Activated CD4-positive, alpha-beta memory T cell treated with anti-CD3 and anti-CD28 coated beads for 36 hours (primary cell): ENCODE measurements at regions of chr6 and their contacts with region 1.

Region 1: GRCh38 chr6:106223300-106223930 is 102.1 kb downstream of the ATG5 start:
- DNase-seq: peak; percentile 75
- H3K4me3 Mint-ChIP-seq: no peak overlapping the region
- H3K27ac Mint-ChIP-seq: no peak overlapping the region
- H3K4me1 Mint-ChIP-seq: peaks cover 37% of the 10 kb centered on the region
- H3K27me3 Mint-ChIP-seq: no peaks in the 10 kb centered on the region

Region 2: DNA sequence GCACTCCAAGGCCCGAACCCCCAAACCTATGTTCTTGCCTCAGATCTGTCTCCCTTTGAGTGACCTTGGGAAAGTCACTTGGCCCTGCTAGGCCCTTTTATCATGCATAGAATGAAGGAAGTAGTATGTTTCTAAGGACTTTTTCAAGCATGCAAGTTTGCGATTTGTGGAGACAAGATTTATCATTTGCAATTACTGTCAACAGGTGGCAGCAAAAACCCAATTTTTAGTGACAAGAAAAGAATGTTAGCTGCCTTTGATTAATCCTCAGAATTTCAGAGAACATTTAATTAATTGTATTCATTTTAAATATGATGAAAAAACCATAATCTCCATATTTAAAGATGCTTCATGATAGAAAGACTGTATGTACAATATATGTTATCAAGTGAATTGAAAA is 792.2 kb before region 1 on chr6:
- CTCF ChIA-PET with region 1: interaction called, 55 read pairs
- POLR2A ChIA-PET with region 1: no interaction called
- intact Hi-C with region 1: loop called (anchors 2 kb)
- DNase-seq: no peak
- H3K4me3 Mint-ChIP-seq: no peak overlapping the region
- H3K27ac Mint-ChIP-seq: no peak overlapping the region
- H3K4me1 Mint-ChIP-seq: no peaks in the 10 kb centered on the region
- H3K27me3 Mint-ChIP-seq: peaks cover 8% of the 10 kb centered on the region

Region 3: GRCh38 chr6:105793130-105793529 is 430.3 kb before region 1 on chr6:
- CTCF ChIA-PET with region 1: no interaction called
- POLR2A ChIA-PET with region 1: no interaction called
- intact Hi-C with region 1: loop called (anchors 5 kb)
- DNase-seq: peak; percentile 30
- H3K4me3 Mint-ChIP-seq: no peak overlapping the region
- H3K27ac Mint-ChIP-seq: no peak overlapping the region
- H3K4me1 Mint-ChIP-seq: peaks cover 54% of the 10 kb centered on the region
- H3K27me3 Mint-ChIP-seq: peaks cover 4% of the 10 kb centered on the region

Region 4: DNA sequence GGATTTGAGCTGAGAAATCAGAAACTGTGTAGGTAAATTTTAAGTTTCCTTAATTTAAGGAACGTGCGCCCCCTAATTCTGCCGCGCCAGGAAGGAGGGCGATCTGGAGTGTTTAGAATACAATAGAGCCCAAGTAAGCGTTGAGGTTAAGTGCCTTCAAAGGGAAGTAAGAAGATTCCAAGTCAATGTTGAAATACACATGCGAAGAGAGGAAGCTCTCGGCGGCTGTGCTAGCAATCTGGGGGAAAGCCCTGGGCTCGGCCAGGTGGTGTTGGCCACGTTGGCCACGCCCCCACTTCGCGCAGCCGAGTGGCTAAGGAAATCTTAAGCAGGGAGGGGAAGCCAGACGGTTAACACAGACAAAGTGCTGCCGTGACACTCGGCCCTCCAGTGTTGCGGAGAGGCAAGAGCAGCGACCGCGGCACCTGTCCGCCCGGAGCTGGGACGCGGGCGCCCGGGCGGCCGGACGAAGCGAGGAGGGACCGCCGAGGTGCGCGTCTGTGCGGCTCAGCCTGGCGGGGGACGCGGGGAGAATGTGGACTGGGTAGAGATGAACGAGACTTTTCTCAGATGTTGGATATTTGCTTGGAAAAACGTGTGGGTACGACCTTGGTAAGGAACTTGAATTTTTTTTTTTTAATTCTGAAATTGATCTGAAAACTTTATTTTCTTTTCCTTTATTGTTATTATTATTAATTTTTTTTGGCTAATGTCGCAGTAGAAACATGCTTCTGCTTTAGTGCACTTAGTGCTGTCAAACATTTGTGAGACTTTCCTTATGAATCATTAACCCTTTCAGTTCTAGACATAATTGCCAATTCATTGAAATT is 137.2 kb before region 1 on chr6 and contains the start of gene PRDM1:
- CTCF ChIA-PET with region 1: interaction called, 13 read pairs
- POLR2A ChIA-PET with region 1: interaction called, 3 read pairs
- intact Hi-C with region 1: loop called (anchors 1 kb)
- DNase-seq: peak; percentile 89
- H3K4me3 Mint-ChIP-seq: peak within 1 kb of the TSS; percentile 90
- H3K27ac Mint-ChIP-seq: peak within 1 kb of the TSS; percentile 94
- H3K4me1 Mint-ChIP-seq: peaks cover 73% of the 10 kb centered on the region
- H3K27me3 Mint-ChIP-seq: peaks cover 2% of the 10 kb centered on the region
- total RNA-seq, gene PRDM1: 70.9 to 78.9 TPM

Region 5: DNA sequence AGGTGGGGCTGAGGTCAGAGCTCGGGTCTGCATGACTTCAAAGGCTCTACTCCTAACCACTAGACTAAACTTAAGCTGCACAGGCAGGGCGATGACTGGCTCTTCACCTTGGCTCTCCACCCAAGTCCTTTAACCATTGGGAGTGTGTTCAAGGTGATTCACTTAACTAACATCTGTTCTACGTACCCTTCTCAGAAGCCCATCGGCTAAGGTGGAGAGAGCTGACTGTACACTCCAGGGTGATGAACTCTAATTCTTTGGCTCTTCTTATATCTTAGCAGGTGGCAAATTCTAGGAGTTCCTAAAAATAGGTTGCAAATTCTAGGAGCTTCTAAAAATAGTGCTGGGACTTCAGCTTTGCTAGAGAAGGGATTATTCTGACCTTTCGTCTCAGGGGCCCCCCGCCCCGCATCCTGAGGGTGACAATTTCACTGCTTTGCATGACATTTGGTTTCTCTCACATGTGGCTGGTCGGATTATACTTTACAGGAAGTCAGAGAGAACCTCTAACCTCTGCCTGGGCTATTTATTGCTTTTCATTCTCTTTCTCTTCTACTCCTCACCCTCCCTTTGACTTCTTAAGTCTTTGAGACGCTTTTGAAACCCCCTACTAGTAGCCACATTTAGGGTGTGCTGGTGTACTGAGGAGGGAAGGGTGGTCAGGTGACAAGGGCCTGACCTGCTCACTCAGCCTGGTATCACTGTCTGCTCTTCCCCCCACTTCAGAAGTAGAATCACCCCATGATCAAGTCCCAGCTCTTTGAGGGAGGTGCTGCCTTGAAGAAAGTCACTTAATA is 81.8 kb before region 1 on chr6:
- CTCF ChIA-PET with region 1: interaction called, 12 read pairs
- POLR2A ChIA-PET with region 1: no interaction called
- intact Hi-C with region 1: no loop called
- DNase-seq: peak; percentile 80
- H3K4me3 Mint-ChIP-seq: peak overlapping the region; percentile 10
- H3K27ac Mint-ChIP-seq: peak overlapping the region; percentile 83
- H3K4me1 Mint-ChIP-seq: peaks cover 49% of the 10 kb centered on the region
- H3K27me3 Mint-ChIP-seq: no peaks in the 10 kb centered on the region

Region 6: GRCh38 chr6:106273087-106273486 is 49.7 kb after region 1 on chr6:
- CTCF ChIA-PET with region 1: no interaction called
- POLR2A ChIA-PET with region 1: no interaction called
- intact Hi-C with region 1: loop called (anchors 5 kb)
- DNase-seq: no peak
- H3K4me3 Mint-ChIP-seq: no peak overlapping the region
- H3K27ac Mint-ChIP-seq: peak overlapping the region; percentile 57
- H3K4me1 Mint-ChIP-seq: peaks cover 15% of the 10 kb centered on the region
- H3K27me3 Mint-ChIP-seq: no peaks in the 10 kb centered on the region